OCI-LY7 (cell line): ENCODE measurements at regions of chr5 and their contacts with region 1.

Region 1: DNA sequence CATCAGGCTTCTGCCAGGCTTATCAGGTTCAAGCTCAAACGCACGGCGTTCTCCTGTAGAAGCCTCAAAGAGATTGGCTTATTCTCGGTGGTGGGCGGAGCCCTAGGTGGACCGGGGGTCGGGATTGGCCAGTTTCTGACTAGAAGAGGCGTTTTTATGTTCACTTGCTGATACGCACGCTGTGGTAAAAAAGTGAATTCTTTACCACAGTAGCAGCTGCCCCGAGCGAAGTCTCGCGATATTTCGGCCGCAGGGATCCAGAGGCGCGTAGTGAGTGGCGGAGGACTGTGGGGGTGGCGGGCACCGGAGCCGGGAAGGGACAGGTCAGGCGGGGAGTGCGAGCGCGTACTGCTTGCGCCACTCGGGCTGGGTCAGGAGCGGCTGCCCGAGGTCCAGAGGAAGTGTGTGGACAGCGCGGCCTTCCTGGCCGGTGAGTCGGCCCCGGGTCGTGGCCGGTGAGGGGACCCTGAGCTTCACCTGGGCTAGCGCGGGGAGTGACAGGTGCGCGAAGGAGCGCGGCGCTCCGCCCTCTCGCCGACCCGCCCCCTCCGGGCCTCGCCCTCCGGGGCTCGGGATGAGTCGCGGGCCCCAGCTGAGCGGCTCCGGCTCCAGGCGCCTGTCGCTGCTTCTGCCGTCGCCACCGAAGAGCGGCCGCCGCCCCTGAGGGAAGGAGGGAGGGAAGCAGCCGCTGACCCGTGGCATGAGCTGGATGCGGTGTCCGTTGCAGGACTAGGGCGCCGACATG is at the start of gene DMXL1:
- DNase-seq: peak; percentile 100
- H3K4me3 ChIP-seq: peak within 1 kb of the TSS; percentile 79
- H3K27ac ChIP-seq: peak within 1 kb of the TSS; percentile 84
- H3K4me1 ChIP-seq: peaks cover 29% of the 10 kb centered on the region
- CTCF ChIP-seq: no peak
- total RNA-seq, gene DMXL1: 43.0 and 76.6 TPM in 2 replicates

Region 2: DNA sequence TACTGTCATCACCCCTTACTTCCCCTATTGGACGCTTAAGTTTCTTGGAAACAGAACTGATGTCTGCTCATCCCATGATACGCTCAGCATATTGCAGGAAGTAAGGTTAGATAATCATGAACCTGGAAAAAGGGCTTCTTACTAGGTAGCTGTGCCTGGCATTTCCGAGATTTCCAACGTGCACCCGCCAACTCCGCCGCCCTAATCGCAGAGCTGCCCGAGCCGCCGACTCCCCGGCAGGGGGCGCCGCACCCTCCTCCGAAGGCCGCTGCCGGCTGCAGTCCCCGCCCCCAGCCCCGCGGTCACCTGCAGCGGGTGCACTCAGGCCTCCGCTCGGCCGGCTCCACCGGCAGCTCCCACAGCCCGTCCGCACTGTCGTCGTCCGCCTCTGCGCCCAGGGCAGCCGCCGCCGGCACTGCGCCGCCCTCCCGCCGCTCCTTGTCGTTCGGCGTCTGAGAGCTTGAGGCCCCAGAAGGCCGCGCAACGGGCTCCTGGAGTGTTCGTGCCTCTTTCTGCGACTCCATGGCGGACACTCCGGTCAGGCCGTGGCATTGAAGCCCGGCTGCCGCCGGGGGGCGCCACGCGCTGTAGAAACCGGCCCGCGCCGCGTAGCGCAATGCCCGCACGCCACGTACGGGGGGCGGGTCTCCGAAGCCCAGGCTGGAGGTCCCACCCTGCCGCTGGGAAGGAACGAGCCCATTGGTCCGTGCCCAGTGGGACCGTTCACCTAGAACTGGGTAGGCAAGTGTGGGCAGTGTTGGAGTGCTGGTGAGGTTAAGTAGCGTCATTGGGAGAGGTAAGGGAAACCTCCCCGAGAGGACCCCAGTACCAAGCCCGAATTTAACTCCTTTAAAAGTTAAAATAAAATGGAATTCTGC is 82.8 kb before region 1 on chr5 and contains the start of gene DTWD2:
- CTCF ChIA-PET with region 1: no interaction called
- POLR2A ChIA-PET with region 1: interaction called, 3 read pairs
- intact Hi-C with region 1: loop called (anchors 1 kb)
- DNase-seq: peak; percentile 96
- H3K4me3 ChIP-seq: peak within 1 kb of the TSS; percentile 75
- H3K27ac ChIP-seq: peak within 1 kb of the TSS; percentile 77
- H3K4me1 ChIP-seq: peaks cover 33% of the 10 kb centered on the region
- CTCF ChIP-seq: peak; percentile 98
- total RNA-seq, gene DTWD2: 4.2 and 8.6 TPM in 2 replicates

Region 3: GRCh38 chr5:119031905-119032304 is 39.1 kb before region 1 on chr5:
- CTCF ChIA-PET with region 1: interaction called, 7 read pairs
- POLR2A ChIA-PET with region 1: interaction called, 24 read pairs
- intact Hi-C with region 1: loop called (anchors 1 kb)
- DNase-seq: peak; percentile 76
- H3K4me3 ChIP-seq: peak overlapping the region; percentile 44
- H3K27ac ChIP-seq: peak overlapping the region; percentile 97
- H3K4me1 ChIP-seq: peaks cover 69% of the 10 kb centered on the region
- CTCF ChIP-seq: no peak

Region 4: DNA sequence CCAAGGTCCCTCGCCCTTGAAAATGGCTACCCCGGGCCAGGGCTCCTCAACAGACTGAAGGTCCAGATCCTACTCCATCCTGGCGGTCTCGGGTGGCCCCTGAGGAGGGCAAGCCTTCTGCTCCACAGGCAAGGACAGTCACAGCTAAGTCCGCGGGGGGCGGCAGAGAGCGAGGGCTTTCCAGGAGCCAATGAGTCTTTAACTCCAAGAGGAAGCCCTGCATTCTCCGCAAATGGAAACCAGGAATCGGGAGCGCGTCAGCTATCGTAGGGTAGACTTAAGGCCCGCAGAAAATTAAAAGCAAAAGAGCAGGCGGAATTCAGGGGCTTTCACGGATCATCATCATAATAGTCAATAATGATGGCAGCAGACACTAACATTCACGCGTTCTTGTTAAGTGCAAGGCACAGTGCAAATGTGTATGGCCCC is 197.0 kb after region 1 on chr5:
- CTCF ChIA-PET with region 1: no interaction called
- POLR2A ChIA-PET with region 1: interaction called, 5 read pairs
- intact Hi-C with region 1: loop called (anchors 2 kb)
- DNase-seq: peak; percentile 84
- H3K4me3 ChIP-seq: peak overlapping the region; percentile 84
- H3K27ac ChIP-seq: peak overlapping the region; percentile 60
- H3K4me1 ChIP-seq: peaks cover 45% of the 10 kb centered on the region
- CTCF ChIP-seq: 0 out of 2 replicates have a peak, but pooled peaks have one; percentile 34

Region 5: GRCh38 chr5:119411935-119412602 is 341.1 kb after region 1 on chr5:
- CTCF ChIA-PET with region 1: interaction called, 5 read pairs
- POLR2A ChIA-PET with region 1: no interaction called
- intact Hi-C with region 1: loop called (anchors 1 kb)
- DNase-seq: peak; percentile 79
- H3K4me3 ChIP-seq: peak overlapping the region; percentile 55
- H3K27ac ChIP-seq: no peak overlapping the region
- H3K4me1 ChIP-seq: peaks cover 37% of the 10 kb centered on the region
- CTCF ChIP-seq: peak; percentile 99